ENCODE measurements at regions of chr5 and their contacts with region 1.

Region 1: GRCh38 chr5:179907570-179908324 is at the start of gene TBC1D9B:
- DNase-seq: peak; percentile 45 to 93 (median 64)
- ATAC-seq: peak; percentile 90
- H3K4me3 ChIP-seq: peak within 1 kb of the TSS; percentile 60
- H3K4me3 Mint-ChIP-seq: peak within 1 kb of the TSS; percentile 95
- H3K27ac ChIP-seq: no peak within 1 kb of the TSS
- H3K27ac Mint-ChIP-seq: peak within 1 kb of the TSS; percentile 82
- H3K4me1 ChIP-seq: peaks cover 25% of the 10 kb centered on the region
- H3K4me1 Mint-ChIP-seq: peaks cover 23% of the 10 kb centered on the region
- H3K27me3 ChIP-seq: no peaks in the 10 kb centered on the region
- H3K27me3 Mint-ChIP-seq: no peaks in the 10 kb centered on the region
- CTCF ChIP-seq: peak; percentile 17
- total RNA-seq, gene TBC1D9B: 67.5 to 71.8 TPM

Region 2: GRCh38 chr5:179678223-179679013 is 229.3 kb before region 1 on chr5:
- CTCF ChIA-PET with region 1: interaction called, 3 read pairs
- POLR2A ChIA-PET with region 1: interaction called, 3 read pairs
- intact Hi-C with region 1: loop called in 1 of 2 experiments (anchors 10 kb)
- DNase-seq: peak; percentile 83 to 98 (median 92)
- ATAC-seq: peak; percentile 86
- H3K4me3 ChIP-seq: peak overlapping the region; percentile 99
- H3K4me3 Mint-ChIP-seq: peak overlapping the region; percentile 97
- H3K27ac ChIP-seq: peak overlapping the region; percentile 83 to 85
- H3K27ac Mint-ChIP-seq: peak overlapping the region; percentile 98
- H3K4me1 ChIP-seq: peaks cover 36% of the 10 kb centered on the region
- H3K4me1 Mint-ChIP-seq: peaks cover 35% of the 10 kb centered on the region
- H3K27me3 ChIP-seq: no peaks in the 10 kb centered on the region
- H3K27me3 Mint-ChIP-seq: no peaks in the 10 kb centered on the region
- CTCF ChIP-seq: no peak

Region 3: GRCh38 chr5:179763215-179763945 is 144.4 kb before region 1 on chr5:
- CTCF ChIA-PET with region 1: no interaction called
- POLR2A ChIA-PET with region 1: no interaction called
- intact Hi-C with region 1: loop called (anchors 2 kb)
- DNase-seq: peak; percentile 19 to 80 (median 38)
- ATAC-seq: peak; percentile 73
- H3K4me3 ChIP-seq: no peak overlapping the region
- H3K4me3 Mint-ChIP-seq: no peak overlapping the region
- H3K27ac ChIP-seq: no peak overlapping the region
- H3K27ac Mint-ChIP-seq: peak overlapping the region; percentile 52
- H3K4me1 ChIP-seq: peaks cover 53% of the 10 kb centered on the region
- H3K4me1 Mint-ChIP-seq: peaks cover 66% of the 10 kb centered on the region
- H3K27me3 ChIP-seq: no peaks in the 10 kb centered on the region
- H3K27me3 Mint-ChIP-seq: no peaks in the 10 kb centered on the region
- CTCF ChIP-seq: peak; percentile 94

Region 4: DNA sequence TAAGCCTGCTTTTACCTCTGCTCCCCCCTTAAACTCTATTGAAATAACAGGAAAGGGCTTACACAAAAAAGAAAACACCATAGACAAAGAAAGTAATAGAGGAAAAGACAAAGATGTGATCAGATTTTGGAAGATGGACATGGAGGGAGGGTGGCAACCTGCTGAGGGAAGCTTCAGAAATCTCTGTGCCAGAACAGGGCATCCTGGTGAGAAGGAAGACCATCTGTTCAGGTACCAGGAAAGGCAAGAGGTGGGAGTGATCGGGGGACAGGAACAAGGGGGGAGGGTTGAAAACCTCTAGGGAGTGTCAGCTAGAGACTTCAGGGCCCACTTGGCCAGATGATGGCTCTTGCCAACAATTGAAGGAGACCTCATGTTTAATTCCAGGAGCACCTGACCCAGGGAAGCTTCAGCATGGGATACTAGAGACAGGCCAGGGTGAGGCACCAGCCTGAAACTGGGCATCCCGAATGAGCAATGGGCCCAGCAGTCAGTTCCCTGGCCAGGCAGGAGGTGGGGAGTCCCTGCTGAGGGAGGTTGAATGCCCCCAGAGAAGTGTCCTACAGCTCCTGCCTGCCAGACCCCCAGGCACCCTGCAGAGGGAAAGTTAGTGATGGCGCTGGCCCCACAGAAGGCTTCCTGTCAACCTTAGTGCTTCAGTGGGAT is 78.9 kb before region 1 on chr5:
- CTCF ChIA-PET with region 1: no interaction called
- POLR2A ChIA-PET with region 1: no interaction called
- intact Hi-C with region 1: no loop called
- DNase-seq: no peak
- ATAC-seq: no peak
- H3K4me3 ChIP-seq: no peak overlapping the region
- H3K4me3 Mint-ChIP-seq: no peak overlapping the region
- H3K27ac ChIP-seq: peak overlapping the region in 1 of 2 donors; percentile 15
- H3K27ac Mint-ChIP-seq: peak overlapping the region; percentile 40
- H3K4me1 ChIP-seq: peaks cover 15% of the 10 kb centered on the region
- H3K4me1 Mint-ChIP-seq: peaks cover 21% of the 10 kb centered on the region
- H3K27me3 ChIP-seq: no peaks in the 10 kb centered on the region
- H3K27me3 Mint-ChIP-seq: no peaks in the 10 kb centered on the region
- CTCF ChIP-seq: no peak

Region 5: GRCh38 chr5:179858586-179859427 is 48.9 kb before region 1 on chr5 and contains the start of gene MRNIP:
- CTCF ChIA-PET with region 1: no interaction called
- POLR2A ChIA-PET with region 1: interaction called, 3 read pairs
- intact Hi-C with region 1: loop called in 1 of 2 experiments (anchors 2 kb)
- DNase-seq: peak; percentile 80 to 94 (median 88)
- ATAC-seq: peak; percentile 96
- H3K4me3 ChIP-seq: peak within 1 kb of the TSS; percentile 74
- H3K4me3 Mint-ChIP-seq: peak within 1 kb of the TSS; percentile 96
- H3K27ac ChIP-seq: peak within 1 kb of the TSS; percentile 34 to 61
- H3K27ac Mint-ChIP-seq: peak within 1 kb of the TSS; percentile 94
- H3K4me1 ChIP-seq: peaks cover 22% of the 10 kb centered on the region
- H3K4me1 Mint-ChIP-seq: peaks cover 17% of the 10 kb centered on the region
- H3K27me3 ChIP-seq: no peaks in the 10 kb centered on the region
- H3K27me3 Mint-ChIP-seq: no peaks in the 10 kb centered on the region
- CTCF ChIP-seq: no peak
- total RNA-seq, gene MRNIP: 31.8 to 32.8 TPM

Region 6: DNA sequence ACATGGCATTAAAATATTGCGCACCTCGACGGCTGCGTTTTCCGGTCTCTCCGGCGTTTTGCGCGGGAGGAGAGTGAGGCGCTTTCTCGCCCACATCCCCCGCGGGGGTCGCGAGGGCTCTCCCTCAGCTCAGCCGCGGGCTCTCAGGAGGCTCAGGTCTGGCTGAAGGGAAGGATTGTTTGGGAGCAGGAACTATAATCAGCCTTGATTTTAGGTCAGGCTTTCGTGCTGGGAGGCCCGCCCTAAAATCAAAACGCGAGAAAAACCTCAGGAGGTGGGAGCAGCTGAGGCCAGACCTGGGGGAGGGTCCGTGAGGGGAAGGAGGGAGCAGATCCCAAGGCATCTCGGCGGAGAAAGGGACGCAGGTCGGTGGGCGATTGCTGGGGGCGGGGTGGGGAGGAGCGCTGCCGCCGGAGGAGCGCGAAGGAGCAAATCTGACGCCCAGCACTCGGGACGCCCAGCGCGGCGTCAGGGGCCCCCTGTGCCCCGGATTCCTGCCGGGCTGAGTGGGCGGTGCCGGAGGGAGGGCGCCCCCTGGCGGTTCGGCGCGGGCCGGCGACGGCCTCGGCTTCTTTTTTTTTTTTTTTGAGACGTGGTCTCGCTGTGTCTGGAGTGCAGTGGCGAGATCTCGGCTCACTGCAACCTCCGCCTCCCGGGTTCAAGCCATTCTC is 182.5 kb after region 1 on chr5:
- CTCF ChIA-PET with region 1: interaction called, 3 read pairs
- POLR2A ChIA-PET with region 1: no interaction called
- intact Hi-C with region 1: loop called (anchors 5 kb)
- DNase-seq: peak; percentile 64 to 91 (median 78)
- ATAC-seq: peak; percentile 58
- H3K4me3 ChIP-seq: peak overlapping the region; percentile 64
- H3K4me3 Mint-ChIP-seq: peak overlapping the region; percentile 81
- H3K27ac ChIP-seq: no peak overlapping the region
- H3K27ac Mint-ChIP-seq: peak overlapping the region; percentile 88
- H3K4me1 ChIP-seq: peaks cover 21% of the 10 kb centered on the region
- H3K4me1 Mint-ChIP-seq: peaks cover 19% of the 10 kb centered on the region
- H3K27me3 ChIP-seq: no peaks in the 10 kb centered on the region
- H3K27me3 Mint-ChIP-seq: peaks cover 3% of the 10 kb centered on the region
- CTCF ChIP-seq: peak; percentile 83

Region 7: DNA sequence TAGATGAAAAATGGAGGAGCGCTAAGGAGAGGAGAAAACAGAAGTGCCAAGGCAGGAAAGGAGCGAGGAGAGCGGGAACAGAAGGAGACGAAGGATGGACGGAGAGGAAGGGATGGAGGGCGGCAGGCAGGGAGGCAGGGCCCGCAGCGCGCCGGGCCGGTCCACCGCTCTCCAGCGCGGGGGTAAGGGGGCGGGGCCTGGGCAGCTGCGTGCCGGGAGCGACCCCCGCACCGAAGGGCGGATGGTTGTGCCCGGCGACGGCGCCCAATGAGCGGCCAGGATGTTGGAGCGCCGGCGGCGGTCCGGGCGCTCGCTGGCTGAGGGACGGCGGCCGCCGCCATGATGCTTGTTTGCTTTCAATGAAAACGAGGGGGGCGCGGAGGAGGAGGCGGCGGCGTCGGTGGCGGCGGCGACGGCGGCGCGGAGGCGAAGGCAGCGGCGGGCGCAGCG is 586.3 kb after region 1 on chr5 and contains the start of gene CNOT6:
- CTCF ChIA-PET with region 1: no interaction called
- POLR2A ChIA-PET with region 1: no interaction called
- intact Hi-C with region 1: loop called in 1 of 2 experiments (anchors 5 kb)
- DNase-seq: peak; percentile 89 to 99 (median 94)
- ATAC-seq: peak; percentile 88
- H3K4me3 ChIP-seq: peak within 1 kb of the TSS; percentile 73
- H3K4me3 Mint-ChIP-seq: peak within 1 kb of the TSS; percentile 100
- H3K27ac ChIP-seq: peak within 1 kb of the TSS; percentile 60 to 83
- H3K27ac Mint-ChIP-seq: peak within 1 kb of the TSS; percentile 98
- H3K4me1 ChIP-seq: peaks cover 34% of the 10 kb centered on the region
- H3K4me1 Mint-ChIP-seq: peaks cover 40% of the 10 kb centered on the region
- H3K27me3 ChIP-seq: no peaks in the 10 kb centered on the region
- H3K27me3 Mint-ChIP-seq: no peaks in the 10 kb centered on the region
- CTCF ChIP-seq: no peak
- total RNA-seq, gene CNOT6: 12.5 to 13.8 TPM